ENCODE measurements at regions of chr3 and their contacts with region 1.

Region 1: DNA sequence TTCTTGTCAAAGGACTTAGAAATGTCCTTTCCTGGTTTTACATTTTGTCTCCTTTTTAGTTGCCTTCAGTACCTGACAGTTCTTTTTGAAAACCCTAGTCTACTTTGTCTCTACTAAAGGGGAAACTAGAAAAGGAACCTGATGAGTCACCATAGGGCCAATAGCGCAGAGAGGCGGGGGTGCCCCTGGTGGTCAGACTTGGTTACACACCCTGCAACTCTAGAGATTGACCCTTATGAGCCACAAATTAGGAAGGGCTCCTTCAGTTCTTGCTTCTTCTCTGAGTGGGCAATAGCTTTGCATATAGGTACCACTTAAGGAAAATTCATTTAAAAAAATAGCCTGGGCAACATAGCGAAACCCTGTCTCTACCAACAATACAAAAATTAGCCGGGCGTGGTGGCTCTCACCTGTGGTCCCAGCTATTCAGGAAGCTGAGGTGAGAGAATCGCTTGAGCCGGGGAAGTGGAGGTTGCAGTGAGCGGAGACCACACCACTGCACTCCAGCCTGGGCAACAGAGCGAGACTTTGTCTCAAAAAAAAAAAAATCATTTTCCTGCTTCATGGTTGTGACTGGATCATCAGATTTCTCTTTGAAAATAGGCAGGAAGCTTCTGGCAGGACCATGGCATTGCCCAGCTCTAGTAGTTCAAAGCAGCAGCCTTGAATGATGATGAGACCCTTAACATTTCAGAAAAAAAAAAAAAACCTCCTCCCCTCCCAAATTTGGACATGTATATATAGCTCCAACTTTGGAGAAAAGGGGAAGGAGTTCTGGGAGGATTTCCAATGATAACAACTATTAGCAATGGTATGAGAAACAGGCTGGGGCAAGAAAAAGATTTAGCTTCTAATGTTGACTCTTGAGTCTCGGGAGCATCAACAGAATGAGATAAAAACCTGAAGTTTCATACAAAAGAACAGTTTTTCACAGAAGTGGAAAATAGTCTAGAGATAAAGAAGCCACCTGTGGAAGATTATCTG is 45.2 kb upstream of the RASA2 start:
- DNase-seq: peak; percentile 56 to 80
- H3K4me3 ChIP-seq: no peak overlapping the region
- H3K4me3 Mint-ChIP-seq: no peak overlapping the region
- H3K27ac Mint-ChIP-seq: peak overlapping the region; percentile 45
- H3K4me1 ChIP-seq: peaks cover 15% of the 10 kb centered on the region
- H3K4me1 Mint-ChIP-seq: peaks cover 28% of the 10 kb centered on the region
- H3K27me3 ChIP-seq: no peaks in the 10 kb centered on the region
- H3K27me3 Mint-ChIP-seq: no peaks in the 10 kb centered on the region
- CTCF ChIP-seq: peak; percentile 83 to 89

Region 2: DNA sequence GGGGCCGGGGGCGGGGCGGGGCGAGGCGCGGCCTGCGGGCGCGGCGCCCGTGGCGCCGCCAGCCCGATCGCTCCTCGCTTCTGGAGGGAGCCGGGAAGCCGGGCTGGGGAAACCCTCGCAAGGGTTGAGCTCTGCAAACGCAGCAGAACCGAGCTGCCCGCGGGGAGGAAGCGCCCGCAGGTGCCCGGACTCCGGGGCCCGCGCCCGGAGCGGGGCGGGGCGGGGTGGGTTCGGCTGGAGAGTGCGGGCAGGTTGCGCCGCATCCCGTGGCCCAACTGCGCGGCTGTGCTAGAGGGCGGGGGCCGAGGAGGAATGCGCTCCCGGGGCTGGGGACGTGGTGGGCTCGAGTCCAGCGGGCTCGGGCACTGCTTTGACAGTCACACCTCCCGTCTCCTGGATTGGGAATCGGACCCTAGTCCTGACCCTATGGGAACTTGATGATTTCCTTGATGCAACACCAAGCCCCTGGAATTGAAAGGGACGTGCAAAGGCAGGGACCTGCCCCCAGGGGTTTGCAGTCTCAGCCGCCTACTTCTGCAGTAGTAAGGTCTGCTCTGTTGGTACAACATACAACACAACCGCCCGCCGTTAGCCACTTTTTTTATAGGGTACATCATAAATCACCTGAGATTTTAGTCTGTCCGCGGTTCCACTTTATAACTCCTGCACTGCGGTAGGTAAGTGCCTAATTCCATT is 39.0 kb before region 1 on chr3:
- CTCF ChIA-PET with region 1: no interaction called
- POLR2A ChIA-PET with region 1: interaction called, 3 read pairs
- intact Hi-C with region 1: loop called (anchors 2 kb)
- DNase-seq: peak; percentile 59 to 70
- H3K4me3 ChIP-seq: peak overlapping the region; percentile 70
- H3K4me3 Mint-ChIP-seq: peak overlapping the region; percentile 67
- H3K27ac Mint-ChIP-seq: no peak overlapping the region
- H3K4me1 ChIP-seq: peaks cover 29% of the 10 kb centered on the region
- H3K4me1 Mint-ChIP-seq: peaks cover 17% of the 10 kb centered on the region
- H3K27me3 ChIP-seq: no peaks in the 10 kb centered on the region
- H3K27me3 Mint-ChIP-seq: no peaks in the 10 kb centered on the region
- CTCF ChIP-seq: no peak

Region 3: DNA sequence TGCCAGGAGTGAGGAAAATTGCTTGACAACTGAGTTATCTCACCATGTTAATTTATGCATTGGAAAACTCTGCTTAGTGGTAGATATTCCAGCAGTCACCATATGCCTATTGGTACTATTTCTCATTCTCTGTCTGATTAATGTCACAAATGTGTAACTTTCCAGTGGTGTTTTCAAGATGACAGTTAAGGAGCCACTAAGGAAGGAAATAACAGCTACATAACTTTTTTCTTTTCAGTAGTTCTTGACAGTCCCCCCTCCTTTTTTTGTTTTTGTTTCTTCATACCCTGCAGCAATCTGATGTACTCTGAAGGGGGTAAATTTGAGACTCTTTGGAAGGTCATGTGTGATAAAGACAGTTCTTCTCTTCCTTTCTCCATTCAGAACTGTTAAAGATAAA is 58.3 kb after region 1 on chr3:
- CTCF ChIA-PET with region 1: no interaction called
- POLR2A ChIA-PET with region 1: no interaction called
- intact Hi-C with region 1: no loop called
- DNase-seq: no peak
- H3K4me3 ChIP-seq: no peak overlapping the region
- H3K4me3 Mint-ChIP-seq: no peak overlapping the region
- H3K27ac Mint-ChIP-seq: no peak overlapping the region
- H3K4me1 ChIP-seq: peaks cover 3% of the 10 kb centered on the region; the same call in 1 of the 2 replicates
- H3K4me1 Mint-ChIP-seq: no peaks in the 10 kb centered on the region
- H3K27me3 ChIP-seq: no peaks in the 10 kb centered on the region
- H3K27me3 Mint-ChIP-seq: no peaks in the 10 kb centered on the region
- CTCF ChIP-seq: no peak